Head of caudate nucleus (tissue), 42 donors: ENCODE measurements at regions of chr11 and their contacts with region 1.

Region 1: DNA sequence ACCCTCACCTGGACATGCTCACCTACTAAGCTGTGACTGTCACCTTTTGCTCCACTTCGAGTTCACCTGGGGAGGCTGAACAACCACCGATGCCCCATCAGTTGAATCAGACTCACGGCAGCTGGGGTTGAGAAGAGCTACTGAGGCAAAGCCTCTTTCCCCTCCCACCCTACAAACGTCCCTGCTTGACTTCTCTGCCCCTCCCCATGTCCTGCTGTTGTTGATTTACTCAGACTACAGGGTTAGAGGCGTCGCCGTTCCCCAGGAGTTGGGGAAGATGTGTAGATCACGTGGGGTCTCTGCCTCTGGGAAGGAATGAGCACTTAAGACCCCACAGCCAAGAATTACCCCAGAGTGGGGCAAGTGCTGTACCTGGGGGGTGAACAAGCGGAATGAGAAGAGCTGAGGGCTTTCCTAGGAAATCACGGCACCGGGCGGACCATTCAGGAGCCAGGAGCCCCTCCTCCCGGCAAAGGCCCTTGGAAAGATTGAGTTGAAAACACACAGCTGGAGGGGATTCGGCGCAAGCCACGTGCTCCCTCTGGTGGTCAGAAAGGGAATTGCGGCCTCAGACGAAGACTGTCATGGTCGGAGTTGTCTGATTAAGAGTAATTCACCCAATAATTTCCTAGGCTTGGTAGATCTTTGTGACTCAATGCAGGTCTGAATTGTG is 7.0 kb downstream of the FXYD2 start:
- DNase-seq: peak; percentile 53 to 97 (median 92)

Region 2: GRCh38 chr11:117426269-117426685 is 391.2 kb before region 1 on chr11:
- intact Hi-C with region 1: loop called (anchors 5 kb)
- DNase-seq: peak; percentile 74 to 94 (median 86)

Region 3: GRCh38 chr11:117443266-117444195 is 374.0 kb before region 1 on chr11:
- intact Hi-C with region 1: loop called (anchors 5 kb)
- DNase-seq: peak; percentile 62 to 90 (median 81)

Region 4: GRCh38 chr11:117885777-117886176 is 68.3 kb after region 1 on chr11:
- intact Hi-C with region 1: no loop called
- DNase-seq: peak in 5 of 42 donors; percentile 11 to 38 (median 24)